BJ (cell line): ENCODE measurements at regions of chr5 and their contacts with region 1.

Region 1: DNA sequence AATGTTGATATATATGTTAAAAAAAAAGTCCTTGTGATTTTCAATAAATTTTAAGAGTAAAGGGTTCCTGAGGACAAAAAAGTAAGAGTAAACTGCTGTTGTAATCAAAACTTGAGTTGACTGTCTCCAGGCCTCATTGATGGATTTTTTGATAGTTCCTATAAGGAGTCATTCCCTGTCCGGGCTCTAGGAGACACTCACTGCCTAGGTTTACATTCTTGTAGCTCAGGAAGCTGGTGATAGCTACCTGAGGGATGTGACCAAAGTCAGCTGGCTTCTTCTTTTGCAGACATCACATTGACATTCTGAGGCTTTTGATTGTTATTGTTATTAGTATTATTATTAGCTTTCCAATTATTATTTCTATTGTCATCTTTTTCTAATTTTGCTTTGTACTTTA is 116.5 kb upstream of the FBXL7 start:
- DNase-seq: no peak
- H3K4me3 ChIP-seq: no peak overlapping the region
- H3K27me3 ChIP-seq: no peaks in the 10 kb centered on the region
- CTCF ChIP-seq: peak; percentile 50

Region 2: GRCh38 chr5:15373151-15373550 is 10.3 kb before region 1 on chr5:
- CTCF ChIA-PET with region 1: no interaction called
- POLR2A ChIA-PET with region 1: interaction called, 13 read pairs
- DNase-seq: no peak
- H3K4me3 ChIP-seq: no peak overlapping the region
- H3K27me3 ChIP-seq: no peaks in the 10 kb centered on the region
- CTCF ChIP-seq: no peak